ENCODE measurements at regions of chrX and their contacts with region 1.

Region 1: GRCh38 chrX:140860718-140861117 is 141.7 kb upstream of the SPANXB1 start:
- DNase-seq: no peak
- ATAC-seq: no peak

Region 2: DNA sequence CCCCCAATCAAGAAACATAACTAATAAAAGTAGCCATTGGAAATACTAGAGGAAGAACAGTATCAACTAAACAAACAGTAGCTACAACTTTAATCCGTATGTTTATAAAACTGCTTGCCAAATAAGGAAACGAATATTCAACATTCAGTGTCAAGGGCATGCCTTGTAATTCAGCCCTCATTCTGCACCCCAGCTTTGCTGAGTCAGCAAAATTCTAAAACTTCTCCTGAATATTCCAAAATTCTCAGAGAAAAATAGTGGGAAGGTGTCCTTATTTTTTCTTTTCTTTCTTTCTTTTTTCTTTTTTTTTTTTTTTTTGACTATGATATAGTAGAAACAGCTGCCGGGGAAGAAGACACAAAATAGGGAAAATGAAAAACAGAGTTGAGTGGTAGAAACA is 1689.2 kb after region 1 on chrX:
- intact Hi-C with region 1: loop called (anchors 5 kb)
- DNase-seq: no peak
- ATAC-seq: no peak